Panc1 (cell line): ENCODE measurements at regions of chr7 and their contacts with region 1.

Region 1: GRCh38 chr7:137656227-137656849 is 190.4 kb downstream of the DGKI start:
- DNase-seq: no peak
- ATAC-seq: peak; percentile 85
- H3K4me3 ChIP-seq: no peak overlapping the region
- H3K27ac ChIP-seq: no peak overlapping the region
- H3K4me1 ChIP-seq: no peaks in the 10 kb centered on the region
- H3K27me3 ChIP-seq: peaks cover 12% of the 10 kb centered on the region
- CTCF ChIP-seq: peak; percentile 91

Region 2: GRCh38 chr7:137519947-137520346 is 136.4 kb before region 1 on chr7:
- CTCF ChIA-PET with region 1: no interaction called
- POLR2A ChIA-PET with region 1: interaction called, 15 read pairs
- in situ Hi-C with region 1: no loop called
- intact Hi-C with region 1: no loop called
- DNase-seq: no peak
- ATAC-seq: no peak
- H3K4me3 ChIP-seq: no peak overlapping the region
- H3K27ac ChIP-seq: no peak overlapping the region
- H3K4me1 ChIP-seq: no peaks in the 10 kb centered on the region
- H3K27me3 ChIP-seq: no peaks in the 10 kb centered on the region
- CTCF ChIP-seq: no peak

Region 3: GRCh38 chr7:137923380-137923779 is 267.0 kb after region 1 on chr7:
- CTCF ChIA-PET with region 1: no interaction called
- POLR2A ChIA-PET with region 1: no interaction called
- in situ Hi-C with region 1: no loop called
- intact Hi-C with region 1: no loop called
- DNase-seq: peak; percentile 51
- ATAC-seq: no peak
- H3K4me3 ChIP-seq: no peak overlapping the region
- H3K27ac ChIP-seq: no peak overlapping the region
- H3K4me1 ChIP-seq: no peaks in the 10 kb centered on the region
- H3K27me3 ChIP-seq: no peaks in the 10 kb centered on the region
- CTCF ChIP-seq: no peak